ENCODE measurements at regions of chr6 and their contacts with region 1.

Region 1: GRCh38 chr6:53862662-53863462 is 68.1 kb downstream of the LRRC1 start:
- DNase-seq: peak in 7 of 10 donors; percentile 33 to 82 (median 61)
- H3K4me3 ChIP-seq: peak overlapping the region in 17 of 59 donors; percentile 1 to 30 (median 12)
- H3K27ac ChIP-seq: peak overlapping the region in 58 of 59 donors; percentile 31 to 93 (median 81)
- H3K27me3 ChIP-seq: no peaks in the 10 kb centered on the region
- CTCF ChIP-seq: peak in 11 of 56 donors; percentile 8 to 26 (median 20)

Region 2: DNA sequence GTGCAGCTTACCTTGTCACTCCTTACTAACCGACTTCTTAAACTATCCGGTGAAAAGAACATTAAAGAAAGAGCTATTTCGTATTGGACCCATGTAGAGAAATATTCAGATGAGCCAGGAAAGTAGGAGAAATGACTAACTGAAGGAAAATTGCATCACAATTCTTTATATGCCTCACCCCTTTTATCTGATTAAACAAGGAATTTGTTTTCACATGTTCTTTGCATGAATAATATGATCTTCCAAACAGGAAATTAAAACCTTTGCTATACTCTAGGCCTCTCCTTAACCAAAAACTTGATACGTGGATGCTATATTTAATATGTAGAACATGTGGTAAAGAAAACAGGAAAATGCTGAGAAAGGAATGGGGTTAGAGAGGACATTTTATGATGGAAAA is 110.0 kb before region 1 on chr6:
- intact Hi-C with region 1: no loop called
- DNase-seq: no peak
- H3K4me3 ChIP-seq: no peak overlapping the region
- H3K27ac ChIP-seq: no peak overlapping the region
- H3K27me3 ChIP-seq: no peaks in the 10 kb centered on the region
- CTCF ChIP-seq: no peak

Region 3: DNA sequence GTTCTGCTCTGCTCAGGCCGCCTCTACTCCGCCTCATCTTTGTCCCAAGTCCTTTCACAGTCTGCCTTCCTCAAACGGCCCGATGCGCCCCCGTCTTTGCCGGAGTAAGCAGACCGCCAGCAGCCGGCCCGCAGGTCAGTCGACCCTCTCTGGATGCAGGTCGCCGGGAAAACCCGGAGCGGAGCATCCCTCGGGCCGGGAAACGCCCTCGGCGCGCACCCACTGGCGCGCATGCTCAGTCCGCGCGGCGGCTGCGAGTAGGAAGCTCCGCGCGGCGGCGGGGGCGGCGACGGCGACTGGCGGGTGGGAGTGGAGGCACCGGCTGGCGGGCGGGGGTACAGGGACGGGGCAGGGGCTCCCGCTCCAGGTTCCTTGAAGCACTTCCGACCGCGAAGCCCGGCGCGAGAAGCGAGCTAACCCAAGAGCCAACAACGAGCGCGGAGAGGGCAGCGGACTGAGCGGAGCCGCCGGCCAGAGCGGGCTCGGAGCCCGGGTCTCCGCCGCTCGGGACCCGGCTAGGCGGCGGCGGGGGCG is 68.1 kb before region 1 on chr6 and contains the start of gene LRRC1:
- intact Hi-C with region 1: loop called (anchors 2 kb)
- DNase-seq: peak; percentile 80 to 94 (median 90)
- H3K4me3 ChIP-seq: peak within 1 kb of the TSS; percentile 57 to 99 (median 92)
- H3K27ac ChIP-seq: peak within 1 kb of the TSS; percentile 20 to 95 (median 89)
- H3K27me3 ChIP-seq: peaks cover 0 to 2% (median 0%) of the 10 kb centered on the region in 45 donors
- CTCF ChIP-seq: peak in 4 of 56 donors; percentile 0 to 28 (median 9)
- total RNA-seq, gene LRRC1: 5.4 to 73.2 (median 19.4) TPM

Region 4: DNA sequence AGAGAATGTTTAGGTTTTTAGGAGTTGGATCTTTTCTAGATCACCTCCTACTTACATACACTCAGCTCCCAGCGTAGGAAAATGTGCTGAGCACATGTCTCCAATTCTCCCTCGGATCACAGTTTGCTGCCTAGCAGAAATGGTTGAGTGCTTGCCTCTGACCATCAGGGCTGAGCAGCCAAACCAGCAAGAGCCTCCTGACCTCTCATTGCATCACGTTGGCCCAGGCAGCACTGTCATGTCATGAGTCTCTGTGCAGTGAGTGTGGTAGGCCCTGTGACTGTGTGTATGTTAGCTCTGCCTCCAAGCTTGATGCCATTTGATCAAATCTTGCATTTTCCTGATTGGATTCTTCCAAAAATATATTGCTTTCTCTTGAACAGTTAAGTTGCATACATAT is 44.0 kb after region 1 on chr6:
- intact Hi-C with region 1: loop called (anchors 5 to 10 kb)
- DNase-seq: peak in 5 of 10 donors; percentile 9 to 62 (median 47)
- H3K4me3 ChIP-seq: no peak overlapping the region
- H3K27ac ChIP-seq: peak overlapping the region in 50 of 59 donors; percentile 2 to 99 (median 41)
- H3K27me3 ChIP-seq: no peaks in the 10 kb centered on the region
- CTCF ChIP-seq: no peak

Region 5: GRCh38 chr6:53916804-53917463 is 54.1 kb after region 1 on chr6:
- intact Hi-C with region 1: loop called in 1 of 2 experiments (anchors 10 kb)
- DNase-seq: peak in 3 of 10 donors; percentile 23 to 61 (median 42)
- H3K4me3 ChIP-seq: no peak overlapping the region
- H3K27ac ChIP-seq: peak overlapping the region in 41 of 59 donors; percentile 12 to 82 (median 49)
- H3K27me3 ChIP-seq: no peaks in the 10 kb centered on the region
- CTCF ChIP-seq: peak in 1 of 56 donors; percentile 10

Region 6: GRCh38 chr6:53956068-53956711 is 93.3 kb after region 1 on chr6:
- intact Hi-C with region 1: loop called in 1 of 2 experiments (anchors 5 kb)
- DNase-seq: peak; percentile 13 to 85 (median 80)
- H3K4me3 ChIP-seq: no peak overlapping the region
- H3K27ac ChIP-seq: peak overlapping the region in 1 of 59 donors; percentile 26
- H3K27me3 ChIP-seq: no peaks in the 10 kb centered on the region
- CTCF ChIP-seq: peak; percentile 31 to 93 (median 84)

Region 7: GRCh38 chr6:54291146-54291545 is 428.3 kb after region 1 on chr6:
- intact Hi-C with region 1: no loop called
- DNase-seq: no peak
- H3K4me3 ChIP-seq: no peak overlapping the region
- H3K27ac ChIP-seq: peak overlapping the region in 18 of 59 donors; percentile 6 to 72 (median 34)
- H3K27me3 ChIP-seq: no peaks in the 10 kb centered on the region
- CTCF ChIP-seq: no peak

Measured in dorsolateral prefrontal cortex (tissue), 120 donors.